ENCODE measurements at regions of chr11 and their contacts with region 1.

Region 1: DNA sequence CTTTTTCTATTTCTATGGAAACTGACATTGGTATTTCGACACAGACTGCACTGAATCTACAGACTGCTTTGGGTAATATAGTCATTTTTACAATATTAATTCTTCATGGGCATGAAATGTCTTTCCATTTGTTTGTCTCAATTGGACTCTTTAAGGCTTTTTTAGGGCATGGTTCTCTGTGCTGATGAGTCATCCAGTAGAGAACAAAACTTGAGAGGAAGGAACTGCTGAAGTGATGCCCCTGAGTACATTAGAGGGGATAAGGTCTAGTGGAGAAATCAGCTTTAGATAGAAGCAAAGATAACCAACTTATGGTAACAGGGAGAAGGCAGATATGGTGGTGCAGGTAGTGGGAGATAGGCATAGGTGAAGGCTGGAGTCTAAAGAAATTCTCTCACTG is 25.1 kb downstream of the TSG101 start:
- DNase-seq: no peak
- H3K4me3 ChIP-seq: no peak overlapping the region
- H3K27ac ChIP-seq: no peak overlapping the region
- H3K4me1 ChIP-seq: no peaks in the 10 kb centered on the region
- H3K27me3 ChIP-seq: no peaks in the 10 kb centered on the region
- CTCF ChIP-seq: no peak

Region 2: GRCh38 chr11:18408558-18409242 is 92.9 kb before region 1 on chr11:
- intact Hi-C with region 1: loop called (anchors 10 kb)
- DNase-seq: no peak
- H3K4me3 ChIP-seq: no peak overlapping the region
- H3K27ac ChIP-seq: no peak overlapping the region
- H3K4me1 ChIP-seq: no peaks in the 10 kb centered on the region
- H3K27me3 ChIP-seq: no peaks in the 10 kb centered on the region
- CTCF ChIP-seq: no peak

Measured in colonic mucosa (tissue), 4 donors.